GM12878 (cell line): ENCODE measurements at regions of chr5 and their contacts with region 1.

Region 1: GRCh38 chr5:112419986-112420864 is 1.1 kb upstream of the EPB41L4A start:
- DNase-seq: peak; percentile 9
- ATAC-seq: peak; percentile 97
- H3K4me3 ChIP-seq: peak overlapping the region; percentile 62
- H3K27ac ChIP-seq: no peak overlapping the region
- H3K4me1 ChIP-seq: no peaks in the 10 kb centered on the region
- H3K27me3 ChIP-seq: peaks cover 0 to 10% of the 10 kb centered on the region in 2 experiments
- CTCF ChIP-seq: peak; percentile 75 to 87 (median 87)
- EP300 ChIP-seq: no peak
- POLR2A ChIP-seq: no peak
- RAD21 ChIP-seq: peak; percentile 82

Region 2: DNA sequence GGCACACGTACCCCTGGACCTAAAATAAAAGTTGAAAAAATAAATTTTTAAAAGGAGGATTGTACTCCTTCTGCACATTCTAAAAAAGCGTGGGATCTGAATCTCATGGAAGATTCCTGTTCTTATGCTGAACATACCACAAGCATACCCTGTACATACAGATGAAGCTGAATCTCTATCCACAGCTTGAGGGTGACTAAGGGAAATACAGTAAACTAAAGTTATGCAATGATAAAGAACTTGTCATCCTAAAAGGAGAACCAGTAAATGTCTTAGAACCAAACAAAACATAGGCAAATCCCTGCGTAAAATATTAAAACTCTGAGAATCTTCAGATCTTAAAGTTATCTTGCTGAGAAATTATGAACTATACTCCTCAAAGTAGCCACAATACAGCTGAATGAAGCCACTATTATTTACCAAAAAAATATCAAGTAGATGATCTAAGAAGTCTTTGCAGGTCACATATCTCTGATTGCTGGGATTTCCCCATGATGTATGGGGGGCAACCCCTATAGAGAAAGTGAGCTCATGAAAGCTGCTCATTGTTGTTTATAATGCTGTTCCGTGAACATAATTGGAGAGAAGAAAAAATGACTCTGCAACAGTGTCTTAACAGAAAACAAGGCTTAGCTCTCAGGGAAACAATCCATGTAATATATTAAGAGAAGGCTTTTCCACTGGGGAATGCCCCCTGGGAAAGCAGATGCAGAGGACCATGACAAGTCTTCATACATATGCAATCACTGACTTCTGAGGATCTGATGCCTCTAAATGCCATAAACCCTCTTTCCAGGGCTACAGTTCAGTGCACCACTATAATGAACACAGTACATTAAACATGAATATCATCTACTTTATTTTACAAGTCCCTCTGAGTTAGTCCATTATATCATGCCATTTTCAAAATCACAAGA is 211.3 kb before region 1 on chr5:
- CTCF ChIA-PET with region 1: interaction called, 9 read pairs
- POLR2A ChIA-PET with region 1: no interaction called
- RAD21 ChIA-PET with region 1: interaction called, 3 read pairs
- SMC1A ChIA-PET with region 1: interaction called, 3 read pairs
- in situ Hi-C with region 1: no loop called
- intact Hi-C with region 1: loop called (anchors 1 kb)
- DNase-seq: no peak
- ATAC-seq: peak; percentile 88
- H3K4me3 ChIP-seq: no peak overlapping the region
- H3K27ac ChIP-seq: no peak overlapping the region
- H3K4me1 ChIP-seq: no peaks in the 10 kb centered on the region
- H3K27me3 ChIP-seq: no peaks in the 10 kb centered on the region
- CTCF ChIP-seq: no peak
- EP300 ChIP-seq: no peak
- POLR2A ChIP-seq: no peak
- RAD21 ChIP-seq: no peak

Region 3: GRCh38 chr5:112239996-112240395 is 180.2 kb before region 1 on chr5:
- CTCF ChIA-PET with region 1: interaction called, 11 read pairs
- POLR2A ChIA-PET with region 1: no interaction called
- RAD21 ChIA-PET with region 1: interaction called, 8 read pairs
- SMC1A ChIA-PET with region 1: interaction called, 4 read pairs
- in situ Hi-C with region 1: no loop called
- intact Hi-C with region 1: loop called (anchors 2 kb)
- DNase-seq: no peak
- ATAC-seq: no peak; the same call in 2 of the 3 replicates
- H3K4me3 ChIP-seq: no peak overlapping the region
- H3K27ac ChIP-seq: no peak overlapping the region
- H3K4me1 ChIP-seq: no peaks in the 10 kb centered on the region
- H3K27me3 ChIP-seq: no peaks in the 10 kb centered on the region; a peak in 1 of 4 replicates
- CTCF ChIP-seq: no peak; a peak in 1 of 6 replicates
- EP300 ChIP-seq: no peak
- POLR2A ChIP-seq: no peak
- RAD21 ChIP-seq: no peak

Region 4: DNA sequence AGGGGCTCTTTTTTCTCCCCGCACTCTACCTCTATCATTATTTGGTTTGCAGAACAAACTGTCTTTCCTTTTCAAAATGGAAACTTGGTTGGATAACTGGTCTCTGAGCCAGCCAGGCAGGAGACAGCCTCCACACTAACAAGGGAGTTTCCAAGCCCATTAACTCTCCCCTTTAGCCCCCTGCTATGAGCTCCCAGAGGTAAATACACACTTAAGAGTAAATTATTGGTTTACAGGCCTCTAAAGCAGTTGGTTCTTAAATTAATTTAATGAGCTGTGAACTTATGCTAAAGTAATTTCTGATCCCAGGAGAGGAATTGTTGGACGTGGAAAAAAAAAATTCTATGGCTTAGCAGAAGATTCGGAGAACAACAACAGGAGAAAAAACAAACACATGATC is 31.5 kb before region 1 on chr5:
- CTCF ChIA-PET with region 1: interaction called, 12 read pairs
- POLR2A ChIA-PET with region 1: no interaction called
- RAD21 ChIA-PET with region 1: no interaction called
- SMC1A ChIA-PET with region 1: interaction called, 3 read pairs
- in situ Hi-C with region 1: no loop called
- intact Hi-C with region 1: no loop called
- DNase-seq: no peak
- ATAC-seq: no peak
- H3K4me3 ChIP-seq: no peak overlapping the region
- H3K27ac ChIP-seq: no peak overlapping the region
- H3K4me1 ChIP-seq: no peaks in the 10 kb centered on the region
- H3K27me3 ChIP-seq: no peaks in the 10 kb centered on the region
- CTCF ChIP-seq: no peak
- EP300 ChIP-seq: no peak
- POLR2A ChIP-seq: no peak
- RAD21 ChIP-seq: no peak

Region 5: DNA sequence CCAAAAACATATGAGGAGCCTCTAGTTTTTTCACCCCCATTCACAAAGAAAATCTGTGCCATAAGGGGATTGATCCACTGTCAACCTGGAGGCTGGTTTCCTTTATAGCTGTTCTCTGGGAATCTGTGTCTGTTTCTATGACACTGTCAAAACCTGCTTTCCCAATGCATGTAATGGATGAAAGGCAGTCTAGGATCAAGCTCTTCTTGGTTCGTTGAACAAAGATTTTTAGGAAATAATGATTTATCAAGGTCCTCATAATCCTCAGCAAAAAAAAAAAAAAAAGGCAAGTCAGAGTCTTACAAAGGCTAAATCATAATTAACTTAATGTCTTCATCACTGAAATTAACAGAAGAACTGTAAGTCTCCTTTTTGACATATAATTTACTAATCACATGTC is 17.2 kb before region 1 on chr5:
- CTCF ChIA-PET with region 1: no interaction called
- POLR2A ChIA-PET with region 1: no interaction called
- RAD21 ChIA-PET with region 1: no interaction called
- SMC1A ChIA-PET with region 1: no interaction called
- in situ Hi-C with region 1: no loop called
- intact Hi-C with region 1: no loop called
- DNase-seq: no peak
- ATAC-seq: no peak
- H3K4me3 ChIP-seq: no peak overlapping the region
- H3K27ac ChIP-seq: no peak overlapping the region
- H3K4me1 ChIP-seq: no peaks in the 10 kb centered on the region
- H3K27me3 ChIP-seq: no peaks in the 10 kb centered on the region
- CTCF ChIP-seq: no peak
- EP300 ChIP-seq: no peak
- POLR2A ChIP-seq: no peak
- RAD21 ChIP-seq: no peak

Region 6: GRCh38 chr5:112529525-112529924 is 109.3 kb after region 1 on chr5:
- CTCF ChIA-PET with region 1: interaction called, 14 read pairs
- POLR2A ChIA-PET with region 1: no interaction called
- RAD21 ChIA-PET with region 1: interaction called, 12 read pairs
- SMC1A ChIA-PET with region 1: interaction called, 13 read pairs
- in situ Hi-C with region 1: no loop called
- intact Hi-C with region 1: loop called (anchors 2 kb)
- DNase-seq: no peak
- ATAC-seq: peak; percentile 71
- H3K4me3 ChIP-seq: no peak overlapping the region
- H3K27ac ChIP-seq: no peak overlapping the region
- H3K4me1 ChIP-seq: peaks cover 26% of the 10 kb centered on the region
- H3K27me3 ChIP-seq: no peaks in the 10 kb centered on the region
- CTCF ChIP-seq: peak; percentile 57 to 61 (median 58); a peak in 5 of 6 replicates
- EP300 ChIP-seq: no peak
- POLR2A ChIP-seq: no peak
- RAD21 ChIP-seq: peak; percentile 65